ENCODE measurements at regions of chr13 and their contacts with region 1.

Region 1: DNA sequence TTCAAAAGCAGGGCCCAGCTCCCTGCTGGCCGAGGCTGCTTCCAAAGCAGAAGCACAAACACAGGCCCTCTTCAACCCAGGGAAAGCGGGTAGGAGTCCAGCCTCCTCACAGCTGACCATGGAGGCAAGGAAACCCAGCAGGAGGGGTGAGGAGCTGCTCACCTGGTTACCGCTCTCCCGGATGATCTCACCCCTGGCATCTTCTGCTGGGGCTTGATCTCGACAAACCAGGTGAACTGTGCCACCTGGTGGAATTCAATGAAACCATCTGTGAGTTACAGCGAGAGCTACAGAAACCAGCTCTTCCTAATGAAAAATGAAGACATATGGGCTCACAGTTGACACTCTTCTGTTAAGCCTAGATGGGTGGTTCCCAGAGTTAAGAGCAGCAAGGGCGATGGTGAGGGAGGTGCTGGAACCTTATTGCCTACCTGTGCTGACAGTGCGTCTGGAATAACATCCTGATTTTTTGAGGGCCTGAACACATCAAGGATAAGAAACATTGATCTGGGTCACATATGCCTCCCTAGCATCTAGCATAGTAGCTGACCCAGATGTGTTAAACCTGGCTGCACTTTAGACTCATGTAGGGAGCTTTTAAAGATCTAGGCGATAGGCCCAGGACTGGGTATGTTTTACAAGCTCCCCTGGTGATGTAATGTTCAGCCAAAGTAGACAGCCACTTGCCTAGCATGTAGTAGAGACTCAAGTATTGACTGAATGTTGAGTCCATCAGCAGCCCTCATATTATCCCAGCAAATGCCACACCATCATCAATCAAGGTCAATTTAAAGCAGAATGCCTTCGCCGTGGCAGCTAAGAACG is 6.1 kb downstream of the DHRS12 start:
- DNase-seq: peak; percentile 58
- H3K4me3 Mint-ChIP-seq: no peak overlapping the region
- H3K27ac Mint-ChIP-seq: no peak overlapping the region
- H3K4me1 Mint-ChIP-seq: peaks cover 10% of the 10 kb centered on the region
- H3K27me3 Mint-ChIP-seq: no peaks in the 10 kb centered on the region
- CTCF ChIP-seq: peak; percentile 64

Region 2: GRCh38 chr13:51125498-51126226 is 672.2 kb before region 1 on chr13:
- CTCF ChIA-PET with region 1: interaction called, 6 read pairs
- intact Hi-C with region 1: loop called (anchors 10 kb)
- DNase-seq: peak; percentile 46
- H3K4me3 Mint-ChIP-seq: no peak overlapping the region
- H3K27ac Mint-ChIP-seq: no peak overlapping the region
- H3K4me1 Mint-ChIP-seq: peaks cover 16% of the 10 kb centered on the region
- H3K27me3 Mint-ChIP-seq: peaks cover 24% of the 10 kb centered on the region
- CTCF ChIP-seq: peak; percentile 54

Region 3: DNA sequence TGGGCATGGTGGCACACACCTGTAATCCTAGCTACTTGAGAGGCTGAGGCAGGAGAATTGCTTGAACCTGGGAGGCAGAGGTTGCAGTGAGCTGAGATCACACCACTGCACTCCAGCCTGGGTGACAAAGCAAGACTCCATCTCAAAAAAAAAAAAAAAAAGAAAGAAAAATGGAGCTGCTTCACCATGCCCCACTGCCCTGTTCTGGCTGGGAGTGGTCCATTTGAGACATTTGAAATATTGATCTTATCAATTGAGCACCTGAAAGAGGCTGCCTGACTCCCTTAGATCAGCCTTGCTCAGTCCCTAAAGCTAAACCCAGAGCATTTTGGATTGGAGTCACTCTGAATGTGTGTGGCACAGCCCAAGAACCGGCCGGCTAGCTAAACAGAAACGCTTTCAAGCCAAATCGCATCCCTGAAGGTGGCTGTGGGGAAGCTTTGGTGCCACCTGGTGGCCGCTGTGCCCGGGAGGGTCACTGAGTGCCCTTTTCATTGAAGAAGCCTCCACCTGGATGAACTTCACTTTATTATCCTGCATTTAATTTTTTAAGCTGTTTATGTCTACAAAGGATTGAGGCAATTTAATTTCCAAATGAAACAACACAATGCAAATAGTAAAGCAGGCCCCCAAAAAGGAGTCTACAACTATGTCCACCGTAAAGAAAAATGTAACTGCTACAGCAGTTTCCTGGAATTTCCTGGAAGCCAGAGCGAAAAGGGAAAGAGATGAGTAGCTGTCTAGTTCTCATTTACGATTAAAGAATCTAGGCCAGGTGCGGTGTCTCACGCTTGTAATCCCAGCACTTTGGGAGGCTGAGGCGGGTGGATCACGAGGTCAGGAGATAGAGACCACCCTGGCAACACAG is 511.5 kb before region 1 on chr13:
- CTCF ChIA-PET with region 1: interaction called, 11 read pairs
- intact Hi-C with region 1: no loop called
- DNase-seq: peak; percentile 72
- H3K4me3 Mint-ChIP-seq: no peak overlapping the region
- H3K27ac Mint-ChIP-seq: no peak overlapping the region
- H3K4me1 Mint-ChIP-seq: no peaks in the 10 kb centered on the region
- H3K27me3 Mint-ChIP-seq: peaks cover 12% of the 10 kb centered on the region
- CTCF ChIP-seq: peak; percentile 68

Region 4: GRCh38 chr13:51435002-51435578 is 362.8 kb before region 1 on chr13:
- CTCF ChIA-PET with region 1: interaction called, 14 read pairs
- intact Hi-C with region 1: loop called (anchors 1 kb)
- DNase-seq: no peak
- H3K4me3 Mint-ChIP-seq: no peak overlapping the region
- H3K27ac Mint-ChIP-seq: no peak overlapping the region
- H3K4me1 Mint-ChIP-seq: no peaks in the 10 kb centered on the region
- H3K27me3 Mint-ChIP-seq: no peaks in the 10 kb centered on the region
- CTCF ChIP-seq: no peak

Region 5: DNA sequence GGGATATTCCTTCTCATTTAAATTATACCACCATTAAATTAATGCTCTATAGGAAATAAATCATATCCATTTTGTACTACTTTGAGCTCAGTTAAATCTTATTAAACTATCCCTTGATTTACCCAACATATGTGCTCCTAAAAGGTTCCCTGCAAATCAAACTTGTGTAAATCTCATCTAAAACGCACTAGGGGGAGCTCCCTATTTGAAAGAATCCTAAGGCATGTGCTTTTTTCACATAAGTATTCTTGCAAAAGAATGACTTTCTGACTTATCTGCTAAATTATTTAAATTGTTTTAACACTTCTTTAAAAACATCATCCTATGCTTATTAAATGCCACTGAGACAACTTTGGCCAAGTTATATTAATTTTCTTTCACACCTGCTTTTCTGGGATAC is 353.0 kb before region 1 on chr13:
- CTCF ChIA-PET with region 1: interaction called, 12 read pairs
- intact Hi-C with region 1: loop called (anchors 5 kb)
- DNase-seq: no peak
- H3K4me3 Mint-ChIP-seq: no peak overlapping the region
- H3K27ac Mint-ChIP-seq: no peak overlapping the region
- H3K4me1 Mint-ChIP-seq: no peaks in the 10 kb centered on the region
- H3K27me3 Mint-ChIP-seq: no peaks in the 10 kb centered on the region
- CTCF ChIP-seq: no peak

Region 6: DNA sequence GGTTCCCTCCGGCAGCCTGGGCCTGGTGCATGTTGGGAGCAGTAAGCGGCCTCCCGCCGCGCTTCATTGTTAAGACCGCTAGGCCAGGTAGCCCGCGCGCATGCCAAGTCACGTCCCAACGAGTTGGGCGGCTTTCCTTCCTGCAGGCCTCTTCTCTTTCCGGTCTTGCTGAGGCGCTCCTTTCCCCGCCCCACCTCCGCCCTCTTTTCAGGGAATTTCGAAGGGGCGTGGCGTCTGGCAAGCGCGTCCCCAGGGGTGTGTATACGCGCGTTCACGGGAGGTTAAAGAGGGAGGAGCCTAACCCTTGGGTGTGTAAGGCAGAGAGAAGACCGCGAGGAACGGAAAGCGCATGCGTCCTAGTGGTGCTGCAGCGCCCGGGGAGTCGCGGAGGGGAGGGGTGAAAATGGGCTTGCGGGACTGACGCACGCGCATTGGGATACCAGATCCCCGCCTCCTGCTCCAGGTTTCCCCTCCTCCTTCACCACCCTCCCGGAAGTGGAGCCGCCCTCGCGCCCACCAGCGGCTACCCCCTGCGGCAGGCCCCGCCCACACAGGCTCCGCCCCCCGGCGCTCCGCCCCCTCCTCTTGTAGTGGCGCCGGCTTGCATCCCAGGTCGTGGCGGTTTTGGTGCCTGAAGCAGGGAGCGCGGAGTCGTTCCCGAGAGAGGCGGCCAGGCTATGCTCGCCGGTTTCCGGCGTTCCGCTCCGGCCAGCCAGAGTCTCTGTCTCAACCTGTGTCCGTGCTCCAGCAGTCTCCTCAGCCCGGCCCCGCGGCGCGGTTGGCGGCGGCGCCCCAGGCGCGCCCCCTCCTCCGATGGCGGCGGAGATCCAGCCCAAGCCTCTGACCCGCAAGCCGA is 213.8 kb before region 1 on chr13 and contains the start of gene WDFY2:
- CTCF ChIA-PET with region 1: interaction called, 3 read pairs
- intact Hi-C with region 1: loop called (anchors 10 kb)
- DNase-seq: peak; percentile 96
- H3K4me3 Mint-ChIP-seq: peak within 1 kb of the TSS; percentile 84
- H3K27ac Mint-ChIP-seq: peak within 1 kb of the TSS; percentile 60
- H3K4me1 Mint-ChIP-seq: peaks cover 13% of the 10 kb centered on the region
- H3K27me3 Mint-ChIP-seq: no peaks in the 10 kb centered on the region
- CTCF ChIP-seq: no peak
- total RNA-seq, gene WDFY2: 5.9 and 6.3 TPM in 2 replicates

Region 7: DNA sequence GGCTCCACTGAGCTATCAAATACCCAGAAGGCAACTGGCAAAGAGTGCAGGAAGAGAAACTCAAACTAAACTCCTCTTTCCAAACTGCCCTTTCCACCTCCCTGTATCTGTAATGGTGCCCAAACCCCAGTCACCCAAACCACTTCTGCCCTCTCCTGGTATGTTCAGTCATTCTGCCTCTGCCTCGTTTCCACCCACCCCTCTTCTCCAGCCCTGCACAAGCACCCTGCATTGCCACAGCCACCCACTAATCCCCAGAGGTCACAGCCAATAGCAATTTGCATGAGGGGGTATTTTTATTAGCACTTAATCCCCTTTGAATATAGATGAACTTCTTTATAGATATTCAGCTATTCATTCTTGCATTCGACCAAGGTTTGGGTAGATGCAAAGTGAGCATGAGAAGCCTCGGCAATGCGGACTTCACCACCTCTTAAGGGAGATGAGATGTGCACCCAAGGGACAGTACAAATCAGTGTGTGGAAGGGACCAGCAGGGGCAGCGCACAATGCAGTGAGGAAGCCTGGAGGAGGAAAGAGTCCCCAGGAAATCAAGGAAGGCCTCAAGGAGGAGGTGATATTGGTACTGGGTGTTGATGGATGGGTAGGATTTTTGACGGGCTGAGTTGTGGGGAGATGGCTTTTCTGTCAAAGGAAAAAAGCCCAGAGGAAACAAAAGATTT is 34.7 kb after region 1 on chr13:
- CTCF ChIA-PET with region 1: no interaction called
- intact Hi-C with region 1: no loop called
- DNase-seq: no peak
- H3K4me3 Mint-ChIP-seq: no peak overlapping the region
- H3K27ac Mint-ChIP-seq: no peak overlapping the region
- H3K4me1 Mint-ChIP-seq: no peaks in the 10 kb centered on the region
- H3K27me3 Mint-ChIP-seq: peaks cover 78% of the 10 kb centered on the region
- CTCF ChIP-seq: no peak